Dorsolateral prefrontal cortex (tissue), 120 donors: ENCODE measurements at regions of chr18 and their contacts with region 1.

Region 1: GRCh38 chr18:28086670-28087552 is 90.0 kb downstream of the CDH2 start:
- DNase-seq: peak in 1 of 10 donors; percentile 56
- H3K4me3 ChIP-seq: peak overlapping the region in 53 of 59 donors; percentile 5 to 62 (median 37)
- H3K27ac ChIP-seq: peak overlapping the region; percentile 22 to 92 (median 80)
- H3K27me3 ChIP-seq: no peaks in the 10 kb centered on the region
- CTCF ChIP-seq: peak in 4 of 56 donors; percentile 2 to 12 (median 8)

Region 2: GRCh38 chr18:27527856-27528255 is 559.1 kb before region 1 on chr18:
- intact Hi-C with region 1: no loop called
- DNase-seq: no peak
- H3K4me3 ChIP-seq: no peak overlapping the region
- H3K27ac ChIP-seq: no peak overlapping the region
- H3K27me3 ChIP-seq: peaks cover 0 to 7% (median 0%) of the 10 kb centered on the region in 45 donors
- CTCF ChIP-seq: no peak

Region 3: GRCh38 chr18:28124131-28125029 is 37.5 kb after region 1 on chr18:
- intact Hi-C with region 1: loop called in 1 of 2 experiments (anchors 5 kb)
- DNase-seq: no peak
- H3K4me3 ChIP-seq: peak overlapping the region in 50 of 59 donors; percentile 0 to 57 (median 28)
- H3K27ac ChIP-seq: peak overlapping the region in 40 of 59 donors; percentile 1 to 78 (median 44)
- H3K27me3 ChIP-seq: no peaks in the 10 kb centered on the region
- CTCF ChIP-seq: no peak

Region 4: DNA sequence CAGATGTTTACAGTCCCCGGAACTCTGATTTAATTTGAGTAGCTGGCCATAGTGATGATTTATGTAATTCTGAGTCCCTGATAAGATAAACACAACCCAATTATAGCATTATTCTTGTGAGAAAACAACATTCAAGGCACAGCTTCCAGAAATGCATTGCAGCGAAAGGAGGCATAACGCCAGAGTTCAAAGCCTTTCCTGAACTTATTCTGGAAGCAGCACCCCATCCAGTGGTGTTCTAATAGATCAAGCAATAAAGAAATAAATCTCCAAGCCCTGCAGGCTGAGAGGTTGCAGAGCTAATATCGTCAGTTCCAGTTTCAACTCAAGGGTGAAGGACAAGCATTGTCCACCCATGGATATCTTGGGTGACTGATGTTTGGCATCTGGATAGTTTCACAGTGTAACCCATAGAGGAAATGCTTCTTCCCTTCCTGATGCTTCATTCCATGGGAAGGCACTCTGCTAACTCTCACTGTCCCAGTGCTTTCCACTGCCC is 71.2 kb after region 1 on chr18:
- intact Hi-C with region 1: loop called in 1 of 2 experiments (anchors 2 kb)
- DNase-seq: no peak
- H3K4me3 ChIP-seq: peak overlapping the region in 24 of 59 donors; percentile 1 to 53 (median 22)
- H3K27ac ChIP-seq: peak overlapping the region in 46 of 59 donors; percentile 4 to 73 (median 43)
- H3K27me3 ChIP-seq: no peaks in the 10 kb centered on the region
- CTCF ChIP-seq: peak in 40 of 56 donors; percentile 6 to 56 (median 33)

Region 5: GRCh38 chr18:28176933-28177827 is 90.3 kb after region 1 on chr18 and contains the start of gene CDH2:
- intact Hi-C with region 1: loop called (anchors 2 to 5 kb)
- DNase-seq: peak; percentile 46 to 78 (median 74)
- H3K4me3 ChIP-seq: peak within 1 kb of the TSS; percentile 65 to 92 (median 80)
- H3K27ac ChIP-seq: peak within 1 kb of the TSS; percentile 80 to 98 (median 96)
- H3K27me3 ChIP-seq: no peaks in the 10 kb centered on the region
- CTCF ChIP-seq: peak in 29 of 56 donors; percentile 8 to 42 (median 25)
- total RNA-seq, gene CDH2: 44.8 to 109 (median 82.2) TPM